Activated naive CD8-positive, alpha-beta T cell treated with anti-CD3 and anti-CD28 coated beads, Interleukin-2, amount 10 ng/mL, durations not matched to agents 7 days and 5 days (primary cell): ENCODE measurements at regions of chr16 and their contacts with region 1.

Region 1: GRCh38 chr16:56708525-56709442 is 21.1 kb upstream of the NUP93 start:
- DNase-seq: peak; percentile 59
- ATAC-seq: peak; percentile 95
- H3K4me3 Mint-ChIP-seq: peak overlapping the region; percentile 77
- H3K27ac Mint-ChIP-seq: peak overlapping the region; percentile 89
- H3K4me1 Mint-ChIP-seq: peaks cover 41% of the 10 kb centered on the region
- H3K27me3 Mint-ChIP-seq: no peaks in the 10 kb centered on the region

Region 2: GRCh38 chr16:56608043-56608875 is 100.5 kb before region 1 on chr16 and contains the start of gene MT2A:
- POLR2A ChIA-PET with region 1: interaction called, 10 read pairs
- DNase-seq: peak; percentile 93
- ATAC-seq: peak; percentile 80
- H3K4me3 Mint-ChIP-seq: peak within 1 kb of the TSS; percentile 91
- H3K27ac Mint-ChIP-seq: peak within 1 kb of the TSS; percentile 90
- H3K4me1 Mint-ChIP-seq: peaks cover 42% of the 10 kb centered on the region
- H3K27me3 Mint-ChIP-seq: no peaks in the 10 kb centered on the region
- total RNA-seq, gene MT2A: 115 to 135 TPM